A549 (cell line): ENCODE measurements at regions of chr5 and their contacts with region 1.

Region 1: DNA sequence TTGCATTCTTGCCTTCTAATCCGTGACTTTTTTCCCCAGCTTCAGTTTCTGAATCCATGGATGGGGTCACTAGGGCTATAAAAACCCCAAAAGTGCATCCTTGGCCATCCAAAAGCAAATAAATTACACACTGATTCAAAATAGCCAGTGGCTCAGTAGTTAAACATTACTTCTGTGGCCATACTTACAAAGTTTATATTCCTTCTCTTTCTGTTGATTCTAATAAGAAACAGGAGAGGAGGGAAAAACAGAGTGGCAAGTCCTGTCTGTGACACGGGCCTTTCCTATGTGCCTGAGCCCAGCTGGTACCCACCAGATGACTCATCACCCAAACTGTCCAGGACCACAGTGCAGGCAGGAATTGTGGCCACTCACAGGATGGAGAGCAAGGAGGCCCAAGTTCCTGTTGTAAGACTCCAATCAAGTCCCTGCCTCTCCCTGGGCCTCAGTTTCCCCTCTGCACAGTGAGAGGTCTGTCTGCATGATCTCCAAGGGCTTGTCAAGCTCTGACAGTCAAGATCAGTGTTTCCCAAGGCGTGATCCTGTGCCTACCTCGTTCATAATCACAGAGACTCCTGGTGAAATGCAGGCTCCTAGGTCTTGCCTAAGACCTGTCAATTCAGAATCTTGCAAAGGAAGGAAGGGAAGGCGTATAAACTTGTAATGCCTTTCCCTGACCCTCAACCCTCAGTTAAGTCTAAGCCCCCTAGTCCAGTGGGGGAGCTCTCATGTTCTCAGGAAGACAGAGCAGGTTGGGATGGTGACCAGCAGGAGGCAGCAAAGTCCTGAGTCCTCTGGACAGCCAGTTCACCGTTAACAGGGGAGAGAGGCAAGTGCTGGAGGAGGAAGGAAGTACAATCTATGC is 29.5 kb downstream of the TNIP1 start:
- DNase-seq: peak; percentile 83 to 85
- ATAC-seq: peak; percentile 79 to 92
- H3K4me3 ChIP-seq: no peak overlapping the region
- H3K27ac ChIP-seq: peak overlapping the region; percentile 29 to 33; a peak in 3 of 6 replicates
- H3K4me1 ChIP-seq: peaks cover 12% of the 10 kb centered on the region
- CTCF ChIP-seq: peak; percentile 92
- EP300 ChIP-seq: no peak
- POLR2A ChIP-seq: no peak
- RAD21 ChIP-seq: peak; percentile 93 to 97

Region 2: DNA sequence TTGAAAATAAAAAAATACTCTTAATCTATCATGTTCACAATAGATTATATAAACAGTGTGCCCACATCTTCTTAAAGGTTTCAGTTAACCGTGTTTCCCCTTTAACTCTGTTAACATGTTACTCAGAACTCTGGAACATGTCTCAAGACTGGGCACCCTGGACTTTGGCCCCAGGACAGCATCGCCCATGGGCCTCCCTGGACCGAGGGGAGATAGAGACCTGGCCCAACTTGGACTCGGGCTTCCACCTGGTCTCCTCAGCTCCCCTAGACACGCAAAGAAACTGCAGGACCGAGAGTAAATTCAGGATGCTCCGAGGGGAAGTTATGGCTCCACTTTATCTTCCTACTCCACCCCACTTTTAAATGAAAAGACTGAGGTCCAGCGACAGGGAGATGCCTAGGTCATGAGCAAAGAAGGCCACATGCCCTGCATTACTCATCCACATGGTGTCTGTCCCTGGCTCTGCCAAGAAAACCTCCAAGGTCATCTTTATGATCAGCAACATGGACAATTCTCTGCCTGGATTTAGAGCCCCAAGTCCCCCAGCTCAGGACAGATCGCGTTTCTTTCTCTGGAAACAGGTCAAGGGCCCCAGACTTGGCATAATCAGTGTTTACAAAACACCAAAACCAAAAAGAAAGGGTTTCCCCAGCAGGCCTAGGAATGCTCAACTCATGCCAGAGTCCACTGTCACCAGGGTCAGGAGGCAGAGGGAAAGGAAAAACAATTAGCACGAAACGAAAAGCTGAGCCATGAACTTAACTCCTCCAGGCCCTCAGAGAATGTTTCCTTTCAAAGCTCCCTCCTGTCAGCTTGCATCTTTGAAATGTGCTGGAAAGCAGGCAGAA is 13.5 kb before region 1 on chr5:
- CTCF ChIA-PET with region 1: interaction called, 151 read pairs
- POLR2A ChIA-PET with region 1: no interaction called
- DNase-seq: no peak
- ATAC-seq: no peak
- H3K4me3 ChIP-seq: no peak overlapping the region
- H3K27ac ChIP-seq: peak overlapping the region in 1 of 2 experiments; percentile 13; a peak in 1 of 6 replicates
- H3K4me1 ChIP-seq: peaks cover 39% of the 10 kb centered on the region
- CTCF ChIP-seq: no peak
- EP300 ChIP-seq: no peak
- POLR2A ChIP-seq: no peak
- RAD21 ChIP-seq: no peak

Region 3: DNA sequence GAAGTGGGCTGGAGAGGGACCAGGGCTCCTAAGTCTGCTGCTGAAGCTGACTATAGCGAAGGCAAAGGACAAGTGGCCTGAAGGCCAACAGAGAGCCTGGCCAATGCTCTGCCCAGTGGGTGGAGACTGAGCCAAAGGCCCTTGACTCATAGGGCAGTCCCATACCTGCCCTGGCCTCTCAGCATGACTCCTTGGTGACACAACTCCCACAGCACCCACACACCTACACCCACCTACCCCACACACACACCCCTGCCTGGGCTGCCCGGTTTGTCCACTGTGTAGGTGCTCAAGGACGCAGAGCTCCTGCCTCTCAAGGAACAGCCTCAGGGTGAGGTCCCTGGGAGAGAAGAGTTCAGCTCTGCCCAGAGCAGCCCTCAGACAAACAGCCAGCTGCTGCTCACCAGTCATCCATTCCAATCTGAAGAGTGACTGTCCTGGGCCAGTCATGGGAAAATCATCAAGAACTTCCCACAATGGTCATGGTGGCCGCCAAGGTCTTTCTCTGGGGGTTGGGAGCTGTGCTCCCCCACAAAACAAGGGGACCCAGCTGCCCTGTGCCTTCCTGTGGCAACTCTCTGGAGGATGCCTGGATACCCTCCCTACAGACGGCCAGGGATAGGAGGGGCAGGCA is 24.5 kb after region 1 on chr5:
- CTCF ChIA-PET with region 1: interaction called, 153 read pairs
- POLR2A ChIA-PET with region 1: interaction called, 6 read pairs
- DNase-seq: peak in 1 of 2 experiments; percentile 44
- ATAC-seq: peak; percentile 16 to 32; a peak in 3 of 6 replicates
- H3K4me3 ChIP-seq: no peak overlapping the region
- H3K27ac ChIP-seq: peak overlapping the region; percentile 43 to 70; a peak in 4 of 6 replicates
- H3K4me1 ChIP-seq: peaks cover 61% of the 10 kb centered on the region
- CTCF ChIP-seq: no peak
- EP300 ChIP-seq: no peak
- POLR2A ChIP-seq: no peak
- RAD21 ChIP-seq: no peak

Region 4: GRCh38 chr5:151093476-151093889 is 42.2 kb after region 1 on chr5:
- CTCF ChIA-PET with region 1: interaction called, 31 read pairs
- POLR2A ChIA-PET with region 1: no interaction called
- DNase-seq: peak in 1 of 2 experiments; percentile 58
- ATAC-seq: peak; percentile 57 to 64
- H3K4me3 ChIP-seq: no peak overlapping the region
- H3K27ac ChIP-seq: peak overlapping the region; percentile 84 to 90
- H3K4me1 ChIP-seq: peaks cover 37% of the 10 kb centered on the region
- CTCF ChIP-seq: no peak
- EP300 ChIP-seq: peak; percentile 18 to 64; a peak in 2 of 5 replicates
- POLR2A ChIP-seq: no peak
- RAD21 ChIP-seq: no peak

Region 5: GRCh38 chr5:151126199-151126645 is 74.9 kb after region 1 on chr5:
- CTCF ChIA-PET with region 1: interaction called, 704 read pairs
- POLR2A ChIA-PET with region 1: no interaction called
- DNase-seq: peak; percentile 72 to 74
- ATAC-seq: peak; percentile 84 to 93; a peak in 5 of 6 replicates
- H3K4me3 ChIP-seq: no peak overlapping the region
- H3K27ac ChIP-seq: no peak overlapping the region
- H3K4me1 ChIP-seq: peaks cover 7% of the 10 kb centered on the region; the same call in 2 of the 3 replicates
- CTCF ChIP-seq: peak; percentile 85
- EP300 ChIP-seq: no peak
- POLR2A ChIP-seq: no peak
- RAD21 ChIP-seq: peak; percentile 74 to 78